ENCODE measurements at regions of chr4 and their contacts with region 1.

Region 1: DNA sequence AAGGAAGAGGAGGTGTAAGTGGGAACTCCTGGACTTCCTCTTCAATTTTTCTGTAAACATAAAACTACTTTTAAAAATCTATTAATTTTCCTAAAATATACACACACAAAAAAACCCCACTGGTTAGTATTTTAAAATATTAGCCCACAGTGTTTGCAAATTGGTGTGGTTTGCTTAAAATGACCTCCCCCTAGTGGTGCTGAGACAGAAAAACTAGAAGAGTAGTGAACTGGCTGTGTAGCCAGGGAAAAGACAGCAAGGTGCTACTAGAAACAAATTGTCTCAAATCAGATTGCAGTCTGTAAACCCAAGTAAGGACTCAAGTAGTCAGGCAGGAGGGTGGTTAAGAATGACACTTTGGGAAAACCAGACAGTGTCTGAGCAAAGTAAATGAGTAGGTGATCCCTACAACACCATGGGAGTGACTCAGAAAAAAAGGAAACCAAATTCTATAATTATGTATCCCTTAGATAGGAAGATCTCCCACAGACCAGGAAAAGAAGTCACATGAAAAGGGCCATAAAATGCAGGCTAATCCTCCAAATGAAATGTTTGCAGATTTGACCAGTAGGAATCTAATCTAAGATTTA is 26.0 kb downstream of the AMTN start:
- DNase-seq: peak; percentile 22
- H3K4me3 ChIP-seq: no peak overlapping the region
- H3K27ac ChIP-seq: no peak overlapping the region
- H3K4me1 ChIP-seq: no peaks in the 10 kb centered on the region
- H3K27me3 ChIP-seq: no peaks in the 10 kb centered on the region
- CTCF ChIP-seq: peak; percentile 59 to 75

Region 2: GRCh38 chr4:69910016-69910782 is 634.2 kb before region 1 on chr4:
- CTCF ChIA-PET with region 1: no interaction called
- dilution Hi-C with region 1: no loop called
- in situ Hi-C with region 1: loop called in 1 of 2 experiments (anchors 25 kb)
- intact Hi-C with region 1: no loop called
- DNase-seq: no peak
- H3K4me3 ChIP-seq: no peak overlapping the region
- H3K27ac ChIP-seq: no peak overlapping the region
- H3K4me1 ChIP-seq: no peaks in the 10 kb centered on the region
- H3K27me3 ChIP-seq: peaks cover 2% of the 10 kb centered on the region
- CTCF ChIP-seq: no peak

Region 3: GRCh38 chr4:70315928-70316327 is 228.4 kb before region 1 on chr4:
- CTCF ChIA-PET with region 1: no interaction called
- dilution Hi-C with region 1: no loop called
- in situ Hi-C with region 1: no loop called
- intact Hi-C with region 1: no loop called
- DNase-seq: no peak
- H3K4me3 ChIP-seq: no peak overlapping the region
- H3K27ac ChIP-seq: no peak overlapping the region
- H3K4me1 ChIP-seq: no peaks in the 10 kb centered on the region
- H3K27me3 ChIP-seq: peaks cover 1% of the 10 kb centered on the region
- CTCF ChIP-seq: peak in 1 of 2 donors; percentile 20